Transverse colon (tissue), 4 donors: ENCODE measurements at regions of chr5 and their contacts with region 1.

Region 1: GRCh38 chr5:151447174-151448037 is at the start of gene SLC36A1:
- DNase-seq: peak; percentile 96
- H3K4me3 ChIP-seq: peak within 1 kb of the TSS; percentile 59 to 76 (median 68)
- H3K27ac ChIP-seq: peak within 1 kb of the TSS; percentile 73 to 81 (median 77)
- H3K4me1 ChIP-seq: peaks cover 7 to 35% (median 20%) of the 10 kb centered on the region in 4 donors
- H3K27me3 ChIP-seq: peaks cover 5% of the 10 kb centered on the region
- CTCF ChIP-seq: peak; percentile 93 to 99 (median 96)
- EP300 ChIP-seq: no peak
- POLR2A ChIP-seq: peak; percentile 48
- total RNA-seq, gene SLC36A1: 35.2 to 91.3 (median 69.8) TPM

Region 2: DNA sequence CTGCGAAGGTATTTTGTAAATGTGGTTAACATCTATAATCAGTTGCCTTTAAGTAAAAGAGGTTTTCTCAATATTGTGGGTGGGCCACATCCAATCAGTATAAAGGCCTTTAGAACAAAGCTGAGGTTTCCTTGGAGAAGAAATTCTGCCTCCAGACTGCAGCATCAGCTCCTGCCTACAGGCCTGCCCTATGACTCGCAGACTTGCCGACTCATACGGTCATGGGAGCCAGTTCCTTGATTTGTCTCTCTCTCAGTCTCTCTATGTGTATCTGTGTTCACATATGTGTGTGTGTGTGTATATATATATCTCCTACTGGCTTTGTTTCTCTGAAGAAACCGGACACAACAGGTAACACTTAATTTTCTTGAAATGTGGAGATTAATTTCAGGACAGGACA is 45.3 kb after region 1 on chr5:
- in situ Hi-C with region 1: loop called in 1 of 4 experiments (anchors 10 kb)
- intact Hi-C with region 1: no loop called
- DNase-seq: no peak
- H3K4me3 ChIP-seq: no peak overlapping the region
- H3K27ac ChIP-seq: peak overlapping the region in 1 of 4 donors; percentile 18
- H3K4me1 ChIP-seq: no peaks in the 10 kb centered on the region
- H3K27me3 ChIP-seq: no peaks in the 10 kb centered on the region
- CTCF ChIP-seq: no peak
- EP300 ChIP-seq: no peak
- POLR2A ChIP-seq: no peak

Region 3: GRCh38 chr5:151499501-151500035 is 52.2 kb after region 1 on chr5:
- in situ Hi-C with region 1: loop called in 1 of 4 experiments (anchors 10 kb)
- intact Hi-C with region 1: loop called (anchors 5 kb)
- DNase-seq: no peak
- H3K4me3 ChIP-seq: no peak overlapping the region
- H3K27ac ChIP-seq: no peak overlapping the region
- H3K4me1 ChIP-seq: no peaks in the 10 kb centered on the region
- H3K27me3 ChIP-seq: no peaks in the 10 kb centered on the region
- CTCF ChIP-seq: no peak
- EP300 ChIP-seq: no peak
- POLR2A ChIP-seq: no peak

Region 4: DNA sequence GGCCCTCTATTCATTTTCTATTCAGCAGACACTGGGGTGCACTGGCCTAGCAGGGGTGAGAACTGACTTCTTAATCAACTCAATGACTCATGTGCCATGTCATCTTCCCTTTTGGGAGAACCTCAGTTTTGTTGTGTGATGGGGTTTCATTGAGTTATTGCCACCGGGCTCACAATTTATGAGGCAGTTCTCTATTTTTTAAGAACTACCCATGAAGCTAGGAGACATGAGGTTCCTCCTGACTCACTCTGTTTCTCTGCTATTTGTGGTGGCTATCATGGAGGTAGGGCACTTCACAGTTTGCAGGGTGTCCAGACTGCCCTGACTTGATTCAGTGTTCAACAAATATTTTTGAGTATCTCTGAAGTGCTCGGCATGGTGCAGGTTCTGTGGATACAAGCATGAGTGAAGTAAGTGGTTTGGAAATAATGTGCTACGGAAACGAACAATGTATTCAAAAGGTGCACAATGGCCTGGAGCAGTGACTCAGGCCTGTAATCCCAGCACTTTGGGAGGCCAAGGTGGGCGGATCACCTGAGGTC is 200.0 kb after region 1 on chr5:
- in situ Hi-C with region 1: loop called in 2 of 4 experiments (anchors 10 kb)
- intact Hi-C with region 1: loop called (anchors 1 kb)
- DNase-seq: no peak
- H3K4me3 ChIP-seq: no peak overlapping the region
- H3K27ac ChIP-seq: no peak overlapping the region
- H3K4me1 ChIP-seq: no peaks in the 10 kb centered on the region
- H3K27me3 ChIP-seq: no peaks in the 10 kb centered on the region
- CTCF ChIP-seq: no peak
- EP300 ChIP-seq: no peak
- POLR2A ChIP-seq: no peak

Region 5: GRCh38 chr5:151659001-151659754 is 211.8 kb after region 1 on chr5:
- in situ Hi-C with region 1: loop called in 2 of 4 experiments (anchors 10 kb)
- intact Hi-C with region 1: no loop called
- DNase-seq: peak; percentile 85
- H3K4me3 ChIP-seq: no peak overlapping the region
- H3K27ac ChIP-seq: peak overlapping the region in 1 of 4 donors; percentile 14
- H3K4me1 ChIP-seq: peaks cover 0 to 12% (median 5%) of the 10 kb centered on the region in 4 donors
- H3K27me3 ChIP-seq: no peaks in the 10 kb centered on the region
- CTCF ChIP-seq: peak; percentile 81 to 90 (median 87)
- EP300 ChIP-seq: no peak
- POLR2A ChIP-seq: no peak

Region 6: GRCh38 chr5:151740336-151740942 is 293.0 kb after region 1 on chr5:
- in situ Hi-C with region 1: loop called in 1 of 4 experiments (anchors 25 kb)
- intact Hi-C with region 1: loop called (anchors 10 kb)
- DNase-seq: peak; percentile 40
- H3K4me3 ChIP-seq: no peak overlapping the region
- H3K27ac ChIP-seq: peak overlapping the region; percentile 52 to 74 (median 68)
- H3K4me1 ChIP-seq: peaks cover 3 to 25% (median 10%) of the 10 kb centered on the region in 4 donors
- H3K27me3 ChIP-seq: no peaks in the 10 kb centered on the region
- CTCF ChIP-seq: peak; percentile 87 to 93 (median 91)
- EP300 ChIP-seq: no peak
- POLR2A ChIP-seq: no peak

Region 7: GRCh38 chr5:151771259-151772028 is 324.0 kb after region 1 on chr5 and contains the start of gene G3BP1:
- in situ Hi-C with region 1: loop called in 1 of 4 experiments (anchors 25 kb)
- intact Hi-C with region 1: no loop called
- DNase-seq: peak; percentile 100
- H3K4me3 ChIP-seq: peak within 1 kb of the TSS; percentile 68 to 86 (median 78)
- H3K27ac ChIP-seq: peak within 1 kb of the TSS; percentile 97 to 99 (median 98)
- H3K4me1 ChIP-seq: peaks cover 23 to 47% (median 39%) of the 10 kb centered on the region in 4 donors
- H3K27me3 ChIP-seq: no peaks in the 10 kb centered on the region
- CTCF ChIP-seq: peak; percentile 29 to 60 (median 46)
- EP300 ChIP-seq: no peak
- POLR2A ChIP-seq: peak; percentile 91
- total RNA-seq, gene G3BP1: 35.4 to 88.6 (median 66.7) TPM